BJ (cell line): ENCODE measurements at regions of chr22 and their contacts with region 1.

Region 1: DNA sequence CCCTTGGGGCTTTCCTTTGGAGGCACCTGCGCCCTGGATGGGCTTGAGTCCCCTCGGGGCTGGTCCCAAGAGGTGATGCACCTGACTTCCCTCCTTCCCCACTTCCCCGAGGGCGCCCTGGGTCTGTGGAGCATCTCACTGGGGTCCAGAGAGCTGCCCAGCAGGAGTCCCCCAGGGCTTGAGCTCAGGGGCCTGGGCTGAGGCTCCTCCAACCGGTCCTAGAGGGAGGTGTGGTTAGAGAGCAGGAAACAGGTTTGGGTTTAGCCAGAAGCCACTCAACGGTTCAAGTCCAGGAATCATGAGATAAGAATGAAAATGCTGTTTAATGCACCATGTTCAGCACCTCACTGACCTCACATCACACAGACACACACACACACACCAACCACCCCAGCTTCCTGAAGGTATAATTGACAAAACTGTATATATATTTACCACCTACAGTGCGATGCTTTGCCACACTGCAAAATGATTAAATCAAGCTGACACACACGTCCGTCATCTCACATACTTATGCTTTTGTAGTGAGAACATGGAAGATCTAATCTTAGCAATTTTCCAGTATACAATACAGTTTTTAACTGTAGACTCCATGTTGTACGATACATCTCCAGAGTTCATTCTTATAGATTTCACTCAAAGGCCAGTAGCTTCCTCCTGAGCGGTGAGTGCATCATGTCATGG is 628 bp upstream of the IGLL1 start:
- DNase-seq: no peak
- H3K4me3 ChIP-seq: no peak overlapping the region
- H3K27me3 ChIP-seq: peaks cover 2% of the 10 kb centered on the region; the same call in 1 of the 2 replicates
- CTCF ChIP-seq: no peak

Region 2: DNA sequence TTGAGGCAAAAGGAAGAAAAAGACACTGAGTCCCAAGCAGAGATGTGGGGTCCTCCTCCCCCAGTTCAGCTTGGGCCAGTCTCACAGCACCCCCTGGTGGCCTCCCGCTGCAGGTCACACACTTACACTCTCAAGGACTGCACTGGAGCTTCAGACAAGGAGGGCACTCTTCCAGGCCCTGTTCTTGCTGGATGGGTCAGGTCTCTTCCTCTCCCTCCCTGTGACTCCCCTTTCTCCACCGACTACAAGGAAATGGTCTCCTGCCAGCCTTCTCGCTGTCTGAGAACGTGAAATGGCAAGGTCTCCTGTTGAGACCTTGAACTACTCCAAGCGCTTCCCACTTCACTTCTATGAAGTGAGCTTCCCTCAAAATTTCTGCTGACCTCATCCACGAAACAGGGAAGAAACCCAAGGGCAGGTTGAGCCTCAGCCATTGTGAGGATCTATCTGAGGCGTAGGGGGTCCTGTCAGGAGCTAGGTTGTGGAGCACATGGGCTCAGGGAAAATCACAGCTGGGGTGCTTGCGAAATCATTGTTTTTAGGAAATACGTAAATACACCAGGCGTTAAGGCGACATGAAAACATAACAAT is 10.6 kb after region 1 on chr22:
- CTCF ChIA-PET with region 1: interaction called, 21 read pairs
- POLR2A ChIA-PET with region 1: no interaction called
- DNase-seq: no peak
- H3K4me3 ChIP-seq: no peak overlapping the region
- H3K27me3 ChIP-seq: peaks cover 2% of the 10 kb centered on the region; the same call in 1 of the 2 replicates
- CTCF ChIP-seq: peak; percentile 95

Region 3: GRCh38 chr22:23632178-23632577 is 51.5 kb after region 1 on chr22 and contains the start of gene DRICH1:
- CTCF ChIA-PET with region 1: no interaction called
- POLR2A ChIA-PET with region 1: no interaction called
- DNase-seq: no peak
- H3K4me3 ChIP-seq: no peak within 1 kb of the TSS
- H3K27me3 ChIP-seq: no peaks in the 10 kb centered on the region
- CTCF ChIP-seq: no peak
- polyA plus RNA-seq, gene DRICH1: not detected in 2 replicates